Activated T-helper 1 cell treated with anti-CD3 and anti-CD28 coated beads, Interleukin-12 subunit alpha, Interleukin-12 subunit beta, Interleukin-2, Interleukin-4 antibody, amounts not matched to agents 30 ng/mL and 10 ng/mL and 1 ng/mL, durations not matched to agents 14 hours and 24 hours and 36 hours (primary cell): ENCODE measurements at regions of chr5 and their contacts with region 1.

Region 1: GRCh38 chr5:108748401-108749127 is 867 bp downstream of the FER start:
- DNase-seq: peak; percentile 95
- H3K4me3 Mint-ChIP-seq: peak overlapping the region; percentile 87
- H3K27ac Mint-ChIP-seq: peak overlapping the region; percentile 68
- H3K4me1 Mint-ChIP-seq: peaks cover 15% of the 10 kb centered on the region
- H3K27me3 Mint-ChIP-seq: peaks cover 30% of the 10 kb centered on the region

Region 2: DNA sequence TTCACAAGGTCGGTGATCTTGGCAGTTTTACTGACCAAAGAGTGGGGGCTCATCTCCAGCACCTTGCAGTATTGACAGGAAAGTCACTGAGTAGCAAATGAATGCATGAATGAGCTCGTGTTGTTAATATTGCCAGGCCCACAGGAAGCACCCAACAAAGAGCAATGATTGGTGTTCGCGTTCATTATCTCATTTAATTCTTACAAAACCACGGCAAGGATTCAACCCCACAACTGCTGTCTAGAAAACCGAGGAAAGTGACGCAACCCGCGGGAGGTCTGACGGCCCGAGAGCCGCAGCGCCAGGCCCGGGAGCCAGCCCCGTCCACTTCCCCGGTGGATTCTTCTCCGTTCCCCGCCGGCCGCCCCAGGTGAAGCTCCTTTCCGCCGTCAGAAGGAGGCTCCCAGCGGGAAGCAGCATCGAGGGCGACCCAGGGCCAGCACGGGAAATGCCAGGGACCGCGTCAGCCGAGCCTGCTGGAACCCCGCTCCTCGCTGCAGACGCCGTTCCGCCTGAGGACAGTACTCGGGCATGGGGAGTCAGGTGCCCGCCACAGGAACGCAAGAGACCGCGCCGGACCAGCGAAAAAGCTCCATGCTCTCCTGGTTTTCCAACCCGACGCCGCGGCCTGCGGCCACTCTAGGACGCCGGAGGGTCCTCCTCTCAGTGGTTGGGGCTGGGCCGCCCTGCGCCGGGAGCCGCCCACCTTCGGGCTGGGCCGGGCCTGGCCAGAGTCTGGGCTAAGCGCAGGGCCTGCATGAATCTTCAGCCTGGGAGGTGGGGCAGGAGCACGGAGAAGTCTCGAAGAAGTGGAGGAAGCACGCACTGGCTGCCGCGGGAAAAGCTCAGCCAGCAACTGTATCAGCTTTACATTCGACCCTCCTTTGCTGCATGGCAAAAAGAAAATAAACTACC is 20.7 kb before region 1 on chr5:
- intact Hi-C with region 1: loop called (anchors 1 kb)
- DNase-seq: no peak
- H3K4me3 Mint-ChIP-seq: peak overlapping the region; percentile 72
- H3K27ac Mint-ChIP-seq: peak overlapping the region; percentile 6
- H3K4me1 Mint-ChIP-seq: peaks cover 15% of the 10 kb centered on the region
- H3K27me3 Mint-ChIP-seq: peaks cover 67% of the 10 kb centered on the region

Region 3: GRCh38 chr5:110092955-110093785 is 1344.6 kb after region 1 on chr5:
- intact Hi-C with region 1: loop called (anchors 10 kb)
- DNase-seq: no peak
- H3K4me3 Mint-ChIP-seq: no peak overlapping the region
- H3K27ac Mint-ChIP-seq: no peak overlapping the region
- H3K4me1 Mint-ChIP-seq: peaks cover 15% of the 10 kb centered on the region
- H3K27me3 Mint-ChIP-seq: no peaks in the 10 kb centered on the region